Activated naive CD4-positive, alpha-beta T cell treated with anti-CD3 and anti-CD28 coated beads, Interleukin-2, amount 10 ng/mL, durations not matched to agents 7 days and 5 days (primary cell): ENCODE measurements at regions of chr11 and their contacts with region 1.

Region 1: DNA sequence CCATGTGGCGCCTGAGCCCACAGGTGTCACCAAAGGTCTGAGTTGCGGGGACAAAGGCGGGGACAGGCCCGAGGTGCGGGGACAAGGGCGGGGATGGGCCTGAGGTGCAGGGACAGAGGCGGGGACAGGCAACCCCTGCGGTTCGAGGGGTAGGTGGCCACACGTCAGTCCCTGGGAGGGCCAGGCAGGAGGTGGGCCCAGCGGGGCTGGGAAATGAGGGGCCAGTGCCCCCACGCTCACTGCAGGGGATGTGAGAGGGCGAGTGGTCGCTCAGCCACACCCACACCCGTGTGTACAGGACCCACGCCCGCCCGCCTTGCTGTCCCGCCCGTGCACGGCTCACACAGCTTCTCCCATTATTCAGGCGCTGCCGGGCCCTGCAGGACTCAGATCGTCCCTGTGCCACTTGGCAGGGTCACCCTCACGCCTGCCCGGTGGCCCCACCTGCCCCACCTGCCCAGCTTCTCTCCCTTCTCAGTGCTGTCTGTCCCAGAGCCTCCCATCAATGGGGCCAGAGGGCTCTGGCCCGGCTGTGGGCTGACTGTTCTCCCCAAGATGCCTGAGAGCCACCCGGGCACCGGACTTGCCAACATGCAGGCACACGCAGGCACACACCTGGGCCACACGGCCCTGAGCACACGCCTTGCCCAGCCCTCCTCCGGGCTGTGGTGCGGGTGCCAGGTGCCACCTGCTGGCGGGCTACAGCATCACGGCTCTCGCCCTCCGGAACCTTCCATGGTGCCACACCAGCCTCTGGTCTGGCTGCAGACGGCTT is 14.2 kb upstream of the MUC6 start:
- DNase-seq: peak; percentile 83
- H3K4me3 Mint-ChIP-seq: no peak overlapping the region
- H3K27ac Mint-ChIP-seq: no peak overlapping the region
- H3K4me1 Mint-ChIP-seq: peaks cover 2% of the 10 kb centered on the region
- H3K27me3 Mint-ChIP-seq: peaks cover 35% of the 10 kb centered on the region

Region 2: GRCh38 chr11:848380-848931 is 202.3 kb before region 1 on chr11:
- CTCF ChIA-PET with region 1: interaction called, 39 read pairs
- DNase-seq: peak; percentile 78
- H3K4me3 Mint-ChIP-seq: peak overlapping the region; percentile 40
- H3K27ac Mint-ChIP-seq: no peak overlapping the region
- H3K4me1 Mint-ChIP-seq: peaks cover 19% of the 10 kb centered on the region
- H3K27me3 Mint-ChIP-seq: peaks cover 72% of the 10 kb centered on the region